ENCODE measurements at regions of chr6 and their contacts with region 1.

Region 1: GRCh38 chr6:109095027-109095834 is at the start of gene CEP57L1:
- DNase-seq: peak; percentile 98 to 99
- H3K4me3 ChIP-seq: peak within 1 kb of the TSS; percentile 63
- H3K4me3 Mint-ChIP-seq: peak within 1 kb of the TSS; percentile 97
- H3K27ac Mint-ChIP-seq: peak within 1 kb of the TSS; percentile 100
- H3K4me1 ChIP-seq: peaks cover 7% of the 10 kb centered on the region; the same call in 1 of the 2 replicates
- H3K4me1 Mint-ChIP-seq: peaks cover 15% of the 10 kb centered on the region
- H3K27me3 ChIP-seq: no peaks in the 10 kb centered on the region
- H3K27me3 Mint-ChIP-seq: no peaks in the 10 kb centered on the region
- CTCF ChIP-seq: no peak
- total RNA-seq, gene CEP57L1: 11.0 and 12.7 TPM in 2 replicates

Region 2: DNA sequence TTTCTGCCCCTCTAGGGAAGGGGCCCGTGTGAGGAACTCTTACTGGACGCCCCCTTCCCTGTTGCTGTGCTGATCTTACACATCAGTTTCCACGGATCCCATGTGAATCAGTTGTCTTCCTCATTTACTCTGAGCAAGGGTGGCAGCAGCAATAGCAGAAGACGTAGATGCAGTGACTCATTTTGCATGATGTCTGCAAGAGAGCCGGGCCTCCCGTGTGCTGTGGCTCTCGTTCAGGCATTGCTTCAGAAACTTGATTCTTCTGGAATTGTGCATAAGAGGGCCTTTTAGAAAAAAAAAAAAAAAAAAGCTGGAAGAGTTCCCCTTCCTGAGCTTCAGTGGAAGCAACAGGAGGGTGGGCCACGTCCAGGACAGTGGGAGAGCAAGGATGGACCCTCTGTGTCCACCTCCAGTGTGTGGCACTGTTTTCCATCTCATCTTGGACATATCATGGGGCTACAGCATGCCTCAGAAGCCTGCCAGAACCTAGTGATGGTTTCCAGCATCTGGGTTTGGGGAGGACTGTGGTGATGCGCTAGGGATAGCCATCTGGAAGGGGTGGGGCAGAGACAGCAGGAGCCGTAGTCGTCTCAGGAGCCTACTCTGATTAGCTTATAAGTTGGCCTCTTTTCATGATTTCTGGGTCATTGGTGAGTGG is 472.5 kb before region 1 on chr6:
- CTCF ChIA-PET with region 1: no interaction called
- POLR2A ChIA-PET with region 1: no interaction called
- intact Hi-C with region 1: no loop called
- DNase-seq: no peak
- H3K4me3 ChIP-seq: no peak overlapping the region
- H3K4me3 Mint-ChIP-seq: no peak overlapping the region
- H3K27ac Mint-ChIP-seq: no peak overlapping the region
- H3K4me1 ChIP-seq: no peaks in the 10 kb centered on the region
- H3K4me1 Mint-ChIP-seq: no peaks in the 10 kb centered on the region
- H3K27me3 ChIP-seq: no peaks in the 10 kb centered on the region
- H3K27me3 Mint-ChIP-seq: no peaks in the 10 kb centered on the region
- CTCF ChIP-seq: no peak

Region 3: GRCh38 chr6:108732136-108732885 is 362.9 kb before region 1 on chr6:
- CTCF ChIA-PET with region 1: no interaction called
- POLR2A ChIA-PET with region 1: no interaction called
- intact Hi-C with region 1: loop called (anchors 5 kb)
- DNase-seq: peak; percentile 45 to 81
- H3K4me3 ChIP-seq: no peak overlapping the region
- H3K4me3 Mint-ChIP-seq: no peak overlapping the region
- H3K27ac Mint-ChIP-seq: peak overlapping the region; percentile 55
- H3K4me1 ChIP-seq: peaks cover 69% of the 10 kb centered on the region
- H3K4me1 Mint-ChIP-seq: peaks cover 54% of the 10 kb centered on the region
- H3K27me3 ChIP-seq: no peaks in the 10 kb centered on the region
- H3K27me3 Mint-ChIP-seq: no peaks in the 10 kb centered on the region
- CTCF ChIP-seq: no peak

Region 4: DNA sequence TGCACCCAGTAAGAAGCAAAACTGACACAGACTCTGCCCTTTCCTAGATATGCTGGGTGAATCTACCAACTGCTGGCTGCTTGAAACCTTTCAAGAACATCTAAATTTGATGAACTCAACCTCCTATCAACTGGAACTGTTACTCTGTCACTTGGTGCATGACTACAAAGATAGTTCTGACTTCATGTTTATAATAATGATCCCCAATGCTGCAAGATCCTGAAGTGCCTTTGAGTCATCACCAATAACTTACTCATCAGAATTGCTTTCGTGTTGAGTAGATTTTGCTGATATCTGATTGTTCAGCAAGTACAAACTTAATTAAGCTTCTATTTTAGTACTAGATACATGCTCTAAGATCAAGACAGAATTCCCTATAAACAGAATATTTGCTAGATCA is 347.2 kb before region 1 on chr6:
- CTCF ChIA-PET with region 1: no interaction called
- POLR2A ChIA-PET with region 1: no interaction called
- intact Hi-C with region 1: no loop called
- DNase-seq: no peak
- H3K4me3 ChIP-seq: no peak overlapping the region
- H3K4me3 Mint-ChIP-seq: no peak overlapping the region
- H3K27ac Mint-ChIP-seq: no peak overlapping the region
- H3K4me1 ChIP-seq: peaks cover 12% of the 10 kb centered on the region; the same call in 1 of the 2 replicates
- H3K4me1 Mint-ChIP-seq: peaks cover 5% of the 10 kb centered on the region
- H3K27me3 ChIP-seq: no peaks in the 10 kb centered on the region
- H3K27me3 Mint-ChIP-seq: no peaks in the 10 kb centered on the region
- CTCF ChIP-seq: no peak

Region 5: DNA sequence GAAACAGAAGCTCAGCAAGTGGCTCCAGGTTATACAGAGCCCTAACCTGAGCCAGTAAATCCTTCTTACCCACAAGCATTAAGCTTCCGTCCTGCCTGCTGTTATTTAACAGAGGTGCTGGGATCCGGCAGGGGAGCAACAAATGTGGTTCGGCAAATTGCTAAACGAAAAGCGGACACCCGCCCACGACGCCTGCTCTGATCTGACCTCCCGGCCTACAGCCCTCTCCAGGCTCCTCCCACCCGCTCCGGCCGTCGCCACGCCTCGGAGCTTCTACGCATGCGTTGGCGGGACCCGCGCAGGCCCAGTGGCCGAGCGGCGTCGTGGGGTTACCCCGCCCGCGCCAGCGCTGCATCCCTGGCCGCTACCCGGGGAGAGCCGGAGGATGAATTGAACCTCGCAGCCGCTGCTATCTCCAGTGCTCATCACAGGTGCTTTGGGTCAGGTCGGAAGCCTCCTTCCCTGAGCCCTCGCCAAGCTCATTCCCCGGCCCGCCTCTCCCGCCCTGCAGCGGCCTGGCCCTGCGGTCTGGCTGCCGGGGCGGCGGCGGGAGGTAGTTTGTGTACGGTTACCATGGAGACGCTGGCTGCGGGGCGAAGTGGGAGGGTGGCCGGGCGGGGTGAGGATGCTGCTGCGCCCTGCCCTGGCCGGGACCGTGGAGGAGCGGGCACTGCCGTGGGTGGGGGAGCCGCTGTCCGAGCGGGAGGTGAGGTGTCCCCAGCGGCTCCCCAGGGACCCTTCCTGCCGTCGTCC is 246.9 kb before region 1 on chr6 and contains the start of gene ARMC2:
- CTCF ChIA-PET with region 1: no interaction called
- POLR2A ChIA-PET with region 1: interaction called, 18 read pairs
- intact Hi-C with region 1: no loop called
- DNase-seq: peak; percentile 89 to 96
- H3K4me3 ChIP-seq: peak within 1 kb of the TSS; percentile 63
- H3K4me3 Mint-ChIP-seq: peak within 1 kb of the TSS; percentile 80
- H3K27ac Mint-ChIP-seq: peak within 1 kb of the TSS; percentile 85
- H3K4me1 ChIP-seq: no peaks in the 10 kb centered on the region
- H3K4me1 Mint-ChIP-seq: peaks cover 6% of the 10 kb centered on the region
- H3K27me3 ChIP-seq: no peaks in the 10 kb centered on the region
- H3K27me3 Mint-ChIP-seq: no peaks in the 10 kb centered on the region
- CTCF ChIP-seq: no peak
- total RNA-seq, gene ARMC2: 6.1 and 7.8 TPM in 2 replicates

Region 6: DNA sequence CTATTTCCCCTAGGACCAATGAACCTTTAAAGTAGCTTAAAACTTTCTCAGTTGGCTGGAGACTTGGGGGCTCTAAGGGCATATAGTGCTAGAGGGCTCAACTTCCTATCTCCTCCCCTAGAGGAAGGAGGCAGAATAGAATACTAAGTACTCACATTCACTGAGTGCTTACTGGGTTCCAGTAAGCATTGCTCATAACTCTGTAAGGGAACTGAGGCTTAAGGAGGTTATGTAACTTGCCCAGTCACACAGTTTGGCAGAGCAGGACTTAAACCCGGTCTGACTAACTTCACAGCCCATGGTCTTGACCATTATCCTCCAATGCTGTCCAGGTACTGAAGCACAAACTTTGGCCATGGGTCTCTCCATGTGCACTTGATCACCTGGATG is 13.0 kb before region 1 on chr6:
- CTCF ChIA-PET with region 1: no interaction called
- POLR2A ChIA-PET with region 1: interaction called, 10 read pairs
- intact Hi-C with region 1: no loop called
- DNase-seq: no peak
- H3K4me3 ChIP-seq: no peak overlapping the region
- H3K4me3 Mint-ChIP-seq: no peak overlapping the region
- H3K27ac Mint-ChIP-seq: no peak overlapping the region
- H3K4me1 ChIP-seq: no peaks in the 10 kb centered on the region
- H3K4me1 Mint-ChIP-seq: peaks cover 2% of the 10 kb centered on the region
- H3K27me3 ChIP-seq: no peaks in the 10 kb centered on the region
- H3K27me3 Mint-ChIP-seq: no peaks in the 10 kb centered on the region
- CTCF ChIP-seq: no peak

Region 7: DNA sequence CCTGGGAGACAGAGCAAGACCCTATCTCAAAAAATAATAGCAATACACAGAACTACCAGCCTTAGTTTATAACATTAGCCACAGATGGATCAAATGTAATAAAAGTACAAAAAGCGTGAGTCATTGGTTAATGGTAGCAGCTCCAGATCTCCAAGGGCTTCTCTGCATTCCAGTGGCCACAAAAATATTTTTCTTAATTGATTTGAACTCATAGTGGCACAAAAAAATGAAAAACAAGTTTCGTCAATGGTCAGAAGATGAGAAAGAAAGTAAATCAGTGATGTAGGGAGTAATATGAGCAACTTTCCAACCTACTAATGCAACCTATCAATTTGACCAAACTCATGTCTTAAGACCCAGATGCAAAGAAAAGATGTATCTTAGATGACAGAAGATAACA is 79.7 kb after region 1 on chr6:
- CTCF ChIA-PET with region 1: interaction called, 3 read pairs
- POLR2A ChIA-PET with region 1: interaction called, 4 read pairs
- intact Hi-C with region 1: loop called (anchors 5 kb)
- DNase-seq: no peak
- H3K4me3 ChIP-seq: no peak overlapping the region
- H3K4me3 Mint-ChIP-seq: no peak overlapping the region
- H3K27ac Mint-ChIP-seq: no peak overlapping the region
- H3K4me1 ChIP-seq: peaks cover 18% of the 10 kb centered on the region
- H3K4me1 Mint-ChIP-seq: peaks cover 6% of the 10 kb centered on the region
- H3K27me3 ChIP-seq: no peaks in the 10 kb centered on the region
- H3K27me3 Mint-ChIP-seq: no peaks in the 10 kb centered on the region
- CTCF ChIP-seq: no peak

Region 8: GRCh38 chr6:109192865-109193264 is 97.6 kb after region 1 on chr6:
- CTCF ChIA-PET with region 1: no interaction called
- POLR2A ChIA-PET with region 1: no interaction called
- intact Hi-C with region 1: no loop called
- DNase-seq: no peak
- H3K4me3 ChIP-seq: no peak overlapping the region
- H3K4me3 Mint-ChIP-seq: no peak overlapping the region
- H3K27ac Mint-ChIP-seq: no peak overlapping the region
- H3K4me1 ChIP-seq: no peaks in the 10 kb centered on the region; the same call in 1 of the 2 replicates
- H3K4me1 Mint-ChIP-seq: no peaks in the 10 kb centered on the region
- H3K27me3 ChIP-seq: no peaks in the 10 kb centered on the region
- H3K27me3 Mint-ChIP-seq: no peaks in the 10 kb centered on the region
- CTCF ChIP-seq: no peak

Measured in Caco-2 (cell line).